PC-3 (cell line): ENCODE measurements at regions of chr2 and their contacts with region 1.

Region 1: DNA sequence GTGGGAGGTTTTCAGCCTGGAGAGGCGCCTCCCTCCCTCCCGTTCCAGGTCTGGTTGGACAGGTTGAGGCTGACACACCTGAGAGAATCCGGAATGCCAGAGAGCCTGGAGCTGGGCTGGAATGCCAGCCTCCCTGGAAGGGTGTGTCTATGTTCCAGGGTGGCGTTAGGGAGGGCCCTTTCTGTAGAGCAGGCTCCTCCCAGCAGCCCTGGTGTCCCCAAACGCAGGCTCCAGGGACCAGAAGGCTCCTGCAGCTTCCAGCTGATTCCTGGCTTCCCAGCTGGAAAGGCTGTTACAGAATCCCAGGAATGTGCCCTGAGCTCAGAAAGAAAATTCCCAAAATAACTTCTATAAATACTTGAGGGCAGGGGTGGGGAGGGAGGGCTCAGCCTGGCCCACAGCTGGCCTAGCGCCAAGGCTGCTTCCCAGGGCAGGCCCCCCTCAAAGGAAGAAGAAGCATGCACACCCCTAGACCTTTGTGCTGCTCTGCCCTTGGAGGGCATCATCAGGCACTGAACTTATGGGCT is 85.4 kb downstream of the STPG4 start:
- DNase-seq: peak; percentile 96
- ATAC-seq: peak; percentile 86
- H3K4me3 ChIP-seq: no peak overlapping the region
- H3K27ac ChIP-seq: peak overlapping the region; percentile 53; the same call in 1 of the 2 replicates
- H3K4me1 ChIP-seq: peaks cover 50% of the 10 kb centered on the region
- H3K27me3 ChIP-seq: no peaks in the 10 kb centered on the region
- CTCF ChIP-seq: no peak

Region 2: GRCh38 chr2:46997884-46998283 is 71.8 kb before region 1 on chr2:
- CTCF ChIA-PET with region 1: no interaction called
- POLR2A ChIA-PET with region 1: no interaction called
- intact Hi-C with region 1: no loop called
- DNase-seq: no peak
- ATAC-seq: no peak
- H3K4me3 ChIP-seq: no peak overlapping the region
- H3K27ac ChIP-seq: no peak overlapping the region
- H3K4me1 ChIP-seq: peaks cover 17% of the 10 kb centered on the region
- H3K27me3 ChIP-seq: no peaks in the 10 kb centered on the region
- CTCF ChIP-seq: no peak

Region 3: GRCh38 chr2:47043142-47043890 is 26.4 kb before region 1 on chr2:
- CTCF ChIA-PET with region 1: interaction called, 4 read pairs
- POLR2A ChIA-PET with region 1: interaction called, 3 read pairs
- intact Hi-C with region 1: loop called (anchors 1 kb)
- DNase-seq: peak; percentile 98
- ATAC-seq: peak; percentile 93
- H3K4me3 ChIP-seq: peak overlapping the region; percentile 59
- H3K27ac ChIP-seq: peak overlapping the region; percentile 98
- H3K4me1 ChIP-seq: peaks cover 40% of the 10 kb centered on the region
- H3K27me3 ChIP-seq: no peaks in the 10 kb centered on the region
- CTCF ChIP-seq: peak; percentile 13; the same call in 1 of the 2 replicates